ENCODE measurements at regions of chr17 and their contacts with region 1.

Region 1: GRCh38 chr17:50783193-50783660 is 15.9 kb upstream of the ANKRD40CL start:
- DNase-seq: peak; percentile 90
- H3K4me3 Mint-ChIP-seq: no peak overlapping the region
- H3K27ac Mint-ChIP-seq: no peak overlapping the region
- H3K4me1 Mint-ChIP-seq: peaks cover 21% of the 10 kb centered on the region
- H3K27me3 Mint-ChIP-seq: peaks cover 4% of the 10 kb centered on the region

Region 2: DNA sequence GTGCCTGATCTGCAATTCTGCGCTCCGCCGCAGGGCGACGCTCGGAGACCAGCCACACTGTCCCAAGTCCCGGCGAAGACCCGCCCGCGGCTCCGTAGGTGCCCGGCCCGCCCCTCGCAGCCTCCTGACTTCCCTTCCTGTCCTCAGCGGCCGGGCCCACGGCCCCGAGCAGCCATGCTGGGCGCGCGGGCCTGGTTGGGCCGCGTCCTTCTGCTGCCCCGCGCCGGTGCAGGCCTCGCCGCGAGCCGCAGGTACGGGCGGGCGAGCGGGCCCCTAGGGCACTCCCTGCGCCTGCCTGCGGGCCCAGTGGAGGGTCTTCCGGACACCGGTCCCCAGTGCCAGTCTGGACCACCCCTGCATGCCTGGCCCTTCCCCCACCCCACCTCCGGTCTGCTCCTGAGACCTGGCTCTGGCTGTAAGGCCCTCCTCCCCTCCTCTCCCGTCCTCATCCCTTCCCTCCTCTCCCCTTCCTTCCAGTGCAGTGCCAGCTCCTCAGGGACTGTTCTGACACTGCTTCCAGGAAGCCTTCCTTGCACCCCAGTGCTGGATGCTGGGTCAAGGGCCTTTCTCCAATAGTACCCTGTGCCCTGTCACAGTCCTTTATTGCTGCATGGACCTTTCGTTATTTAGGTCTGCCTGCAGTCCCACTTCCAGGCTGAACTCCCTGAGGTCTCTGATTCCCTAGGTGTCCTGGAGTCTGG is 236.0 kb before region 1 on chr17 and contains the start of gene SPATA20:
- CTCF ChIA-PET with region 1: interaction called, 3 read pairs
- intact Hi-C with region 1: loop called (anchors 2 kb)
- DNase-seq: peak; percentile 92
- H3K4me3 Mint-ChIP-seq: peak within 1 kb of the TSS; percentile 74
- H3K27ac Mint-ChIP-seq: peak within 1 kb of the TSS; percentile 67
- H3K4me1 Mint-ChIP-seq: peaks cover 9% of the 10 kb centered on the region
- H3K27me3 Mint-ChIP-seq: peaks cover 2% of the 10 kb centered on the region
- total RNA-seq, gene SPATA20: 15.8 to 16.1 TPM

Region 3: GRCh38 chr17:50737118-50737698 is 46.0 kb before region 1 on chr17:
- CTCF ChIA-PET with region 1: no interaction called
- intact Hi-C with region 1: no loop called
- DNase-seq: peak; percentile 34
- H3K4me3 Mint-ChIP-seq: no peak overlapping the region
- H3K27ac Mint-ChIP-seq: no peak overlapping the region
- H3K4me1 Mint-ChIP-seq: peaks cover 55% of the 10 kb centered on the region
- H3K27me3 Mint-ChIP-seq: no peaks in the 10 kb centered on the region

Region 4: DNA sequence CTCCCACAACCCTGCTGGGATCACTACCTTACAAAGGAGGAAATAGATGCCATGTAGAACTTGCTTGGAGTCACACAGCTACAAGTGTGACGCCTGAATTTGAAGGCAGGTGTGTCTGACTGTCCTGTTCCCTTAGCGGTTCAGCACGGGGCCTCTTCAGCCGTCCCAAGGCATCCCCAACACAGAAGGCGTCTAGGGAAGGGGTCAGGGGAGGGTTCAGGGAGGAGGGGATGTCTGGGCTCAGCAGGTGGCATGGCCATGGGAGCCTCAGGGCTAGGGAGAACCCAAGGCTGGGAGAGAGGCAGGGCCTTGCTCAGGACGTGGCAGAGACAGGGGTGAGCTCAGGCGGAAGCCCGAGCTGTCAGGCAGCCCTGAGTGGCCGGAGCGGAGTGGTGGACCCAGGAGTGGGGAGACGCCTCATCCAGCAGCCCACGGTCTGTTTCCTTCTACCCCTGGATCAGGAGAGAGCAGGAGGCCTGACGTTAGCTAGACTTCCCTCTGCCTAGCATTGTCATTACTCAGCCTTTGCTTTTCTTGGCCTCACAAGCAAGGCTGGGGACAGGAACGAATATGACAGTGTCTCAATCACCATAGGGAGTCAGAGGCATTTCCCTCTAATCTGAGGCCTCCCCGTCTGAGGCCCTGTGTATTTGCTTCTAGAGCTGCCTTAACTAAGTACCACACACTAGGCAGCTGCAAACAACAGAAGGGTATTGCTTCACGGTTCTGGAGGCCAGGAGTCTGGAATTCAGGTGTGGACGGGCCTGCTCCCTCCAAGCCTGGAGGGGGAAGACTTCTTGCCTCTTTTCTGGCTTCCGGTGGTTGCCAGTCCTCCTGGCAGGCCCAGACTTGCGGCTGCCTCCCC is 15.4 kb after region 1 on chr17:
- CTCF ChIA-PET with region 1: interaction called, 24 read pairs
- intact Hi-C with region 1: no loop called
- DNase-seq: no peak
- H3K4me3 Mint-ChIP-seq: no peak overlapping the region
- H3K27ac Mint-ChIP-seq: no peak overlapping the region
- H3K4me1 Mint-ChIP-seq: no peaks in the 10 kb centered on the region
- H3K27me3 Mint-ChIP-seq: no peaks in the 10 kb centered on the region

Region 5: GRCh38 chr17:50816771-50817751 is 33.8 kb after region 1 on chr17:
- CTCF ChIA-PET with region 1: interaction called, 5 read pairs
- intact Hi-C with region 1: loop called (anchors 2 kb)
- DNase-seq: peak; percentile 59
- H3K4me3 Mint-ChIP-seq: no peak overlapping the region
- H3K27ac Mint-ChIP-seq: no peak overlapping the region
- H3K4me1 Mint-ChIP-seq: no peaks in the 10 kb centered on the region
- H3K27me3 Mint-ChIP-seq: no peaks in the 10 kb centered on the region

Region 6: DNA sequence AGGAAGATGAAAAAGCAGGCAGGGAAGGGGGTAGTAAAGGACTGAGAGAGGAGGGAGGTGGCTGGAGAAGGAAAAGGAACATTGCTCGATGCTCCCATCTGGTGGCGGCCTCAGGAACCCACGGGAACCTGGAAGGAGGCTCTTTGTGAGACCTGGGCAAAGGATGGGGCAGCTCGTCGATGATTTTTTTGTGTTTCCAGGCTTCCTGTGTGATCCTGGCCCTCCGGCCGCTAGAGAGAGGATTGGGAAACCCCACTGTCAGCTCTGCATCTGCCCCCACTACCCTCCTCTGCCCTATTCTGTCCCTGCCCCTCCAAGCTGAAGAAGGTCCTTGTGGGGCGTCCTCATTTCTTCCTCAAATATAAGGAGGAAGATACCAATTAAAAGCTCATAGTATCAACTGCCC is 58.7 kb after region 1 on chr17:
- CTCF ChIA-PET with region 1: interaction called, 79 read pairs
- intact Hi-C with region 1: loop called (anchors 1 kb)
- DNase-seq: peak; percentile 73
- H3K4me3 Mint-ChIP-seq: no peak overlapping the region
- H3K27ac Mint-ChIP-seq: no peak overlapping the region
- H3K4me1 Mint-ChIP-seq: peaks cover 3% of the 10 kb centered on the region
- H3K27me3 Mint-ChIP-seq: no peaks in the 10 kb centered on the region

Region 7: GRCh38 chr17:50949989-50950881 is 167.0 kb after region 1 on chr17:
- CTCF ChIA-PET with region 1: interaction called, 71 read pairs
- intact Hi-C with region 1: loop called (anchors 1 kb)
- DNase-seq: peak; percentile 80
- H3K4me3 Mint-ChIP-seq: no peak overlapping the region
- H3K27ac Mint-ChIP-seq: peak overlapping the region; percentile 53
- H3K4me1 Mint-ChIP-seq: peaks cover 26% of the 10 kb centered on the region
- H3K27me3 Mint-ChIP-seq: no peaks in the 10 kb centered on the region

Region 8: DNA sequence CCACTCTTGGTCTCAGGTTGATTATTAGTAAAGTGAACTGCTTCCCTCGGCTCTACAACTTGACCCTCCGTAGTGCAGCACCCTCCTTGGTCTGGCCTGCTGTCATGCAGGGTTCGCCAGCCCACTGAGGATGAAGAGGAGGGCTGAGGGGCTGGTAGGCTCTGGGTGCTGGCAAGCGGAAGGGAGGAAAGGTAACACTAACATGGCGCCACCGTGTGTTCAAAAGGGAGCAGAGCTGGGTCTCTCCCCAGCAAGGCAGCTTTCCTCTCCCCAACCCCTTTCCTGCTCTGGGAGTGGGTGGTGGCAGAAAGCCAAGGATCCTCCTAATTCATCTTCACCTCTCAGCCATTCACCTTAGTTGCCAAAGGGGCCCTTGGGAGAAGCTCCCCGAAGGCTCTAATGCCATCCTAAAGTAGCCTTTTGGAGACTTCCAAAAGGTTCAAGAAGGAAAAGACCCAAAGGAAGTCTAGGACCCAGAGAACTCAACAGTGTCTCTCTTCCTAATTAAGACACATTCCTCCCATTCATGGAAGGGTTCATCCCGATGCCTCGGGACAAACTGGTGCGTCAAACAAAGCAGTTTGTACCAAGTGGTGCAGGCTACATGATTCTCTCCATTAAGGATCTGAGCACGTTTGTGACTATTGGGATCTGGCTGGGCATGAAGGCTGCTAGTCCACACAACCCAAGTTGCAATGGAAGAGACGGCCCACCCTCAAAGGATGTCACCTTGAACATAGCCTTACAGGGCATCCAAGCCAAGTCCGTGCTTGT is 173.7 kb after region 1 on chr17:
- CTCF ChIA-PET with region 1: interaction called, 71 read pairs
- intact Hi-C with region 1: loop called (anchors 1 kb)
- DNase-seq: peak; percentile 83
- H3K4me3 Mint-ChIP-seq: no peak overlapping the region
- H3K27ac Mint-ChIP-seq: peak overlapping the region; percentile 53
- H3K4me1 Mint-ChIP-seq: peaks cover 2% of the 10 kb centered on the region
- H3K27me3 Mint-ChIP-seq: no peaks in the 10 kb centered on the region

Region 9: DNA sequence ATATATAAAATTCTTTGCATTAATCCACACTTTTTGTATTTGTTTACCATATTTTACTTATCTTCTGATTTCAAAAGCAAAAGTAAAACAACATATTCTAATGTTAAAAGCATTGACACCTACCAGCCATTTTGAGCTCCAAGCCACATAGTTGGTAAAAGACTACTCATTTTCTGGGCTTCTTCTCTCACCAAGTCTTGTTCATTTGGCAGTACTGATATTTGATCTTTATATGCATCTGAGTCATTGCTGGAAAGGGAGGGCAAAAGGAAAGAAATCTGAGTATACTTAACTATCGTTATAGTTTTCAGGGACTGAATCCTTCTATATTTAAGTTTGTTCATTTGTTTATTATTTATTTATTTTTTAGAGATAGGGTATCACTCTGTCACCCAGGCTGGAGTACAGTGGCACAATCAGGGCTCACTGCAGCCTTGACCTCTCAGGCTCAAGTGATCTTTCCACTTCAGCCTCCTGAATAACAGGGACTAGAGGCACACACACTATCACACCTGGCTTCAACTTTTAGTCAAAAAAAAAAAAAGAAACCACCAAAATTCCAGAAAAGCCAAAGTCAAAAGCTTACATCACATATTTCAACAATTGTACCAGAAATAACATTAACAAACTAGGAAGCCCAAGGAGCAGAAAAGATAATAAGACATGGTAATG is 203.9 kb after region 1 on chr17:
- CTCF ChIA-PET with region 1: no interaction called
- intact Hi-C with region 1: no loop called
- DNase-seq: no peak
- H3K4me3 Mint-ChIP-seq: no peak overlapping the region
- H3K27ac Mint-ChIP-seq: no peak overlapping the region
- H3K4me1 Mint-ChIP-seq: no peaks in the 10 kb centered on the region
- H3K27me3 Mint-ChIP-seq: no peaks in the 10 kb centered on the region

Region 10: GRCh38 chr17:51245535-51245934 is 462.3 kb after region 1 on chr17:
- CTCF ChIA-PET with region 1: no interaction called
- intact Hi-C with region 1: no loop called
- DNase-seq: no peak
- H3K4me3 Mint-ChIP-seq: no peak overlapping the region
- H3K27ac Mint-ChIP-seq: no peak overlapping the region
- H3K4me1 Mint-ChIP-seq: peaks cover 2% of the 10 kb centered on the region
- H3K27me3 Mint-ChIP-seq: no peaks in the 10 kb centered on the region